Tibial artery (tissue), 4 donors: ENCODE measurements at regions of chr18 and their contacts with region 1.

Region 1: DNA sequence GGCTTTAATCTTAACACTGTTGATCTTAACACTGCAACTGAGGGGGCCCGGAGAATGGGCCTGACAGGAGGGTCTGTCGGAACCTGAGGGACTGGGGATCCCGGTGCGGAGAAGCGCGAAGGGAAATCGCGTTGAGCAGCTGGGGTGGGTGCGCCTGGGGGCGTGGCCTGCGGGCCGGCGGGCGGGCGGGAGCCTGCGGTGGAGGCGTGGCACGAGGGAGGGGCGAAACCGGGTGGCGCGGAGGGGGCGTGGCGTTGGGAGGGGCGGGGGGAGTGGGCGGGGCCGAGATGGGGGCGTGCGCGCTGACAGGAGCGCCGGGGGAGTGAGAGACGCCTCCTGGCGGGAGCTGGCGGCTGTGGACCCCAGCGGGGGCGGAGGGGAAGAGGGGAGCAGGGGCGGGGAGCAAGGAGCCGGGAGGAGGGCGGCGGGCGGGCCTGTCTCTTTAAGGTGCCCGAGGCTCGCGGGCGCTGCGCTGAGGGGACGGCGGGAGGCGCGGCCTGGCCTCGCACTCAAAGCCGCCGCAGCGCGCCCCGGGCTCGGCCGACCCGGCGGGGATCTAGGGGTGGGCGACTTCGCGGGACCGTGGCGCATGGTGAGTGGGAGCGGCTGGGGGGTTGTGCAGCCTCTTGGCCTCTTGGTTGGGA is at the start of gene TWSG1:
- DNase-seq: peak; percentile 93 to 97
- H3K4me3 ChIP-seq: peak within 1 kb of the TSS; percentile 92 to 96
- H3K27ac ChIP-seq: peak within 1 kb of the TSS; percentile 95 to 99
- H3K4me1 ChIP-seq: peaks cover 0 to 31% (median 13%) of the 10 kb centered on the region in 4 donors
- H3K27me3 ChIP-seq: no peaks in the 10 kb centered on the region
- CTCF ChIP-seq: peak in 1 of 2 experiments; percentile 52

Region 2: GRCh38 chr18:9474983-9475642 is 140.7 kb after region 1 on chr18 and contains the start of gene RALBP1:
- intact Hi-C with region 1: loop called (anchors 2 kb)
- DNase-seq: peak; percentile 99 to 100
- H3K4me3 ChIP-seq: peak within 1 kb of the TSS; percentile 91 to 97
- H3K27ac ChIP-seq: peak within 1 kb of the TSS; percentile 94 to 97
- H3K4me1 ChIP-seq: peaks cover 0 to 24% (median 6%) of the 10 kb centered on the region in 4 donors
- H3K27me3 ChIP-seq: no peaks in the 10 kb centered on the region
- CTCF ChIP-seq: no peak